GM12878 (cell line): ENCODE measurements at regions of chr22 and their contacts with region 1.

Region 1: GRCh38 chr22:50562523-50563412 is at the start of gene SYCE3:
- DNase-seq: peak; percentile 75
- ATAC-seq: peak; percentile 98
- H3K4me3 ChIP-seq: peak within 1 kb of the TSS; percentile 94
- H3K27ac ChIP-seq: no peak within 1 kb of the TSS
- H3K4me1 ChIP-seq: no peaks in the 10 kb centered on the region
- H3K27me3 ChIP-seq: peaks cover 0 to 1% of the 10 kb centered on the region in 2 experiments; a peak in 1 of 4 replicates
- CTCF ChIP-seq: peak; percentile 92 to 94 (median 92)
- EP300 ChIP-seq: no peak
- POLR2A ChIP-seq: peak; percentile 66
- RAD21 ChIP-seq: peak; percentile 70
- polyA plus RNA-seq, gene SYCE3: 0.76 to 0.91 TPM

Region 2: DNA sequence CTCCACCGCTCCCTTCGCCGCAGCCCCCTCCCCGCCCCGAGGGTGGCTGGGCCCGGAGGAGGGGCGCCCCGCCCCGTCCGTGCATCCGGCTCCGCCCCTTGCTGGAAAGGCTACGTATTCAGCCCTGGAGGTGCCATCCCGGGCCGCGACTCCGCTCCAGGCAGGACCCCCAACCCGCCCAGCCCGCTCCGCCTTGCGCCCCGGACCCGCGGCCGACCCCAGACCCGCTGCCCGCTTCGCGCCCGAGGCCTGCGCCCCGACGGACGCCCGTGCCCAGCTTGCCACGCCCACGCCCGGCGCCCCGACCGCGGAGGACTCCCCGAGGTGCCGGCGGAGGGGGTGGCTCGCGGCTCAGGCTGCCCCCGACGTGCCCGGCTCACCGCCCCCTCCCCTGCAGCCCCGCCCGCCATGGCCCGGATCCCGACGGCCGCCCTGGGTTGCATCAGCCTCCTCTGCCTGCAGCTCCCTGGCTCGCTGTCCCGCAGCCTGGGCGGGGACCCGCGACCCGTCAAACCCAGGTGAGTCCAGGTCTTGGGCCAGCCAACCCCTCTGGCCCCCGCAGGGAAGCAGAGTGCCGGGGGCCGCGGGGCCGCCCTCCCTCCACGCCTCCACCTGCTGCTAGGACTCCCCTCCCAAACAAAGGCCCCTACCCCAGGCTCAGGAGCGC is 81.2 kb before region 1 on chr22 and contains the start of gene ADM2:
- CTCF ChIA-PET with region 1: no interaction called
- POLR2A ChIA-PET with region 1: no interaction called
- RAD21 ChIA-PET with region 1: no interaction called
- SMC1A ChIA-PET with region 1: no interaction called
- in situ Hi-C with region 1: no loop called
- intact Hi-C with region 1: no loop called
- DNase-seq: no peak
- ATAC-seq: peak; percentile 59
- H3K4me3 ChIP-seq: peak within 1 kb of the TSS; percentile 55
- H3K27ac ChIP-seq: no peak within 1 kb of the TSS
- H3K4me1 ChIP-seq: no peaks in the 10 kb centered on the region
- H3K27me3 ChIP-seq: peaks cover 0 to 3% of the 10 kb centered on the region in 2 experiments; a peak in 2 of 4 replicates
- CTCF ChIP-seq: no peak
- EP300 ChIP-seq: no peak
- POLR2A ChIP-seq: peak; percentile 54; the same call in 1 of the 2 replicates
- RAD21 ChIP-seq: no peak
- polyA plus RNA-seq, gene ADM2: 0.02 TPM in 1 of 2 experiments, not detected in the other

Region 3: GRCh38 chr22:50507991-50508884 is 54.5 kb before region 1 on chr22 and contains the start of gene NCAPH2:
- CTCF ChIA-PET with region 1: interaction called, 12 read pairs
- POLR2A ChIA-PET with region 1: interaction called, 9 read pairs
- RAD21 ChIA-PET with region 1: interaction called, 5 read pairs
- SMC1A ChIA-PET with region 1: interaction called, 5 read pairs
- in situ Hi-C with region 1: no loop called
- intact Hi-C with region 1: no loop called
- DNase-seq: peak; percentile 83
- ATAC-seq: peak; percentile 69
- H3K4me3 ChIP-seq: peak within 1 kb of the TSS; percentile 100
- H3K27ac ChIP-seq: peak within 1 kb of the TSS; percentile 90
- H3K4me1 ChIP-seq: peaks cover 9% of the 10 kb centered on the region
- H3K27me3 ChIP-seq: no peaks in the 10 kb centered on the region
- CTCF ChIP-seq: peak in 1 of 3 experiments; percentile 33; a peak in 2 of 6 replicates
- EP300 ChIP-seq: no peak
- POLR2A ChIP-seq: peak; percentile 98
- RAD21 ChIP-seq: peak; percentile 16; the same call in 1 of the 2 replicates
- polyA plus RNA-seq, gene NCAPH2: 5.0 to 16.9 TPM

Region 4: GRCh38 chr22:50537765-50538164 is 25.0 kb before region 1 on chr22:
- CTCF ChIA-PET with region 1: interaction called, 14 read pairs
- POLR2A ChIA-PET with region 1: interaction called, 12 read pairs
- RAD21 ChIA-PET with region 1: interaction called, 3 read pairs
- SMC1A ChIA-PET with region 1: interaction called, 14 read pairs
- in situ Hi-C with region 1: no loop called
- intact Hi-C with region 1: loop called (anchors 1 kb)
- DNase-seq: no peak
- ATAC-seq: no peak
- H3K4me3 ChIP-seq: peak overlapping the region; percentile 28; the same call in 1 of the 2 replicates
- H3K27ac ChIP-seq: peak overlapping the region; percentile 100
- H3K4me1 ChIP-seq: peaks cover 68% of the 10 kb centered on the region
- H3K27me3 ChIP-seq: no peaks in the 10 kb centered on the region
- CTCF ChIP-seq: no peak
- EP300 ChIP-seq: no peak
- POLR2A ChIP-seq: no peak
- RAD21 ChIP-seq: no peak

Region 5: GRCh38 chr22:50544078-50544745 is 18.6 kb before region 1 on chr22:
- CTCF ChIA-PET with region 1: interaction called, 14 read pairs
- POLR2A ChIA-PET with region 1: interaction called, 10 read pairs
- RAD21 ChIA-PET with region 1: interaction called, 3 read pairs
- SMC1A ChIA-PET with region 1: interaction called, 14 read pairs
- in situ Hi-C with region 1: no loop called
- intact Hi-C with region 1: loop called (anchors 1 kb)
- DNase-seq: no peak
- ATAC-seq: peak; percentile 43
- H3K4me3 ChIP-seq: no peak overlapping the region
- H3K27ac ChIP-seq: peak overlapping the region; percentile 45; the same call in 1 of the 2 replicates
- H3K4me1 ChIP-seq: peaks cover 46% of the 10 kb centered on the region
- H3K27me3 ChIP-seq: peaks cover 0 to 1% of the 10 kb centered on the region in 2 experiments; a peak in 1 of 4 replicates
- CTCF ChIP-seq: peak; percentile 62 to 76 (median 72)
- EP300 ChIP-seq: no peak
- POLR2A ChIP-seq: peak; percentile 38
- RAD21 ChIP-seq: peak; percentile 38; the same call in 1 of the 2 replicates

Region 6: GRCh38 chr22:50582562-50583293 is 20.0 kb after region 1 on chr22 and contains the start of gene CHKB:
- CTCF ChIA-PET with region 1: interaction called, 13 read pairs
- POLR2A ChIA-PET with region 1: interaction called, 6 read pairs
- RAD21 ChIA-PET with region 1: interaction called, 3 read pairs
- SMC1A ChIA-PET with region 1: no interaction called
- in situ Hi-C with region 1: no loop called
- intact Hi-C with region 1: no loop called
- DNase-seq: peak; percentile 80
- ATAC-seq: peak; percentile 97
- H3K4me3 ChIP-seq: peak within 1 kb of the TSS; percentile 90
- H3K27ac ChIP-seq: peak within 1 kb of the TSS; percentile 94
- H3K4me1 ChIP-seq: peaks cover 15% of the 10 kb centered on the region
- H3K27me3 ChIP-seq: no peaks in the 10 kb centered on the region
- CTCF ChIP-seq: no peak
- EP300 ChIP-seq: no peak
- POLR2A ChIP-seq: peak; percentile 86
- RAD21 ChIP-seq: no peak
- polyA plus RNA-seq, gene CHKB: 10.0 to 20.6 TPM